H1 (cell line): ENCODE measurements at regions of chr9 and their contacts with region 1.

Region 1: GRCh38 chr9:114291064-114291474 is 31.8 kb upstream of the ORM1 start:
- DNase-seq: peak; percentile 62 to 97
- H3K4me3 ChIP-seq: no peak overlapping the region
- H3K27ac ChIP-seq: no peak overlapping the region
- H3K4me1 ChIP-seq: peaks cover 0 to 13% (median 2%) of the 10 kb centered on the region in 4 experiments; a peak in 5 of 7 replicates
- H3K27me3 ChIP-seq: no peaks in the 10 kb centered on the region
- CTCF ChIP-seq: peak in 2 of 3 experiments; percentile 85 to 92; a peak in 3 of 4 replicates
- EP300 ChIP-seq: no peak
- POLR2A ChIP-seq: no peak
- RAD21 ChIP-seq: peak; percentile 92 to 94

Region 2: GRCh38 chr9:114098016-114098935 is 192.8 kb before region 1 on chr9:
- CTCF ChIA-PET with region 1: interaction called, 205 read pairs
- POLR2A ChIA-PET with region 1: interaction called, 3 read pairs
- DNase-seq: peak in 1 of 2 experiments; percentile 88
- H3K4me3 ChIP-seq: peak overlapping the region; percentile 58 to 84 (median 62)
- H3K27ac ChIP-seq: no peak overlapping the region
- H3K4me1 ChIP-seq: peaks cover 0 to 16% (median 10%) of the 10 kb centered on the region in 4 experiments; a peak in 6 of 7 replicates
- H3K27me3 ChIP-seq: peaks cover 2 to 27% (median 19%) of the 10 kb centered on the region in 4 experiments
- CTCF ChIP-seq: peak in 1 of 3 experiments; percentile 33; a peak in 1 of 4 replicates
- EP300 ChIP-seq: no peak
- POLR2A ChIP-seq: no peak
- RAD21 ChIP-seq: no peak

Region 3: GRCh38 chr9:114141553-114142402 is 149.3 kb before region 1 on chr9:
- CTCF ChIA-PET with region 1: interaction called, 17 read pairs
- POLR2A ChIA-PET with region 1: no interaction called
- DNase-seq: no peak
- H3K4me3 ChIP-seq: no peak overlapping the region
- H3K27ac ChIP-seq: no peak overlapping the region
- H3K4me1 ChIP-seq: no peaks in the 10 kb centered on the region
- H3K27me3 ChIP-seq: peaks cover 0 to 2% (median 0%) of the 10 kb centered on the region in 4 experiments; a peak in 3 of 7 replicates
- CTCF ChIP-seq: no peak
- EP300 ChIP-seq: no peak
- POLR2A ChIP-seq: no peak
- RAD21 ChIP-seq: no peak

Region 4: DNA sequence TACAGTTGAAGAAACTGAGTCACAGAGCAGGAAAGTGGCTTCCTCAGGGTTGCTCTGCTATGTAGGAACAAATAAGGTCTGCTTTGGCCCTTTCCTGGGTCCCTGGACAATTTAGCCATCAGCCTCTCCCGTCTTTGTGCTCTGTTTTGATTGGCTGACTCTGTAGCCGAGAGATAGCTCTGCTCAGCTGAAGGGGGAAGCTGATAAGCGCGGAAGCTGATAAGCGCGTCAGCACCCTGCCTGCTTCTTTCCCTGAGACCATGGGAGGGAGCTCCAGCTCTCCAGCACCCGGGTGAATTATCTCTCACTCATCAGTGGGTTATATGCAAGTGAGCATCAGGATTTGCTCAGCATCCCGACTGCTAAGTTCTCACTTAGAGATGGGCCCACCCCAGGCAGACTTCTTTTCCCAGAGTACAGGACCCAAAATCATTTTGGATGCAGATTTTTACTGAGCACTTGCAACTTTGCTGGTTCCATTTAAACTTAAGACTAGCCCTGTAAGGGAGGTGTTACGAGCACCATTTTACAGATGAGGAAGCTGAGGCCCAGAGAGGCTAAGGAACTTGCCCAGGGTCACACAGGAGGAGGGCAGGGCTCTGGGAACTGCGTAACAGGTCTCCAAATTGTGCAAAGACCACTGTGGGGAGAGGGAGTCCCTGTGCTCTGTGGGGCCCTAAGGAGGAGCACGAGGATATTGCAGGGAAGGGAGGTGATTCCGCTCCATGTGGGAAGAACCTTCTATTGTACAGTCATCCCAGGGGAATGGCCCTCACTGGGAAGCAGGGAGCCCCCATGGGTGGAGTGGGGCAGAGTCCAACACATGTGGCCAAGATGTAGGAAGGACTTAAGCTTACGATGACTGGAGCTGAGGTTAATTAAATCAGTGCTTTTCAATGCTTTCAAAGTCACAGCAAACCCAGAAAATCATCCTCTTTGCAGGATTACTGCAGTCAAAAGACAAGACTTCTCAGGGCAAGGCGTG is 51.9 kb before region 1 on chr9:
- CTCF ChIA-PET with region 1: interaction called, 11 read pairs
- POLR2A ChIA-PET with region 1: no interaction called
- DNase-seq: no peak
- H3K4me3 ChIP-seq: no peak overlapping the region
- H3K27ac ChIP-seq: no peak overlapping the region
- H3K4me1 ChIP-seq: peaks cover 0 to 4% (median 0%) of the 10 kb centered on the region in 4 experiments; a peak in 2 of 7 replicates
- H3K27me3 ChIP-seq: no peaks in the 10 kb centered on the region; a peak in 2 of 7 replicates
- CTCF ChIP-seq: peak in 2 of 3 experiments; percentile 40 to 52; a peak in 3 of 4 replicates
- EP300 ChIP-seq: no peak
- POLR2A ChIP-seq: no peak
- RAD21 ChIP-seq: peak; percentile 52 to 57

Region 5: DNA sequence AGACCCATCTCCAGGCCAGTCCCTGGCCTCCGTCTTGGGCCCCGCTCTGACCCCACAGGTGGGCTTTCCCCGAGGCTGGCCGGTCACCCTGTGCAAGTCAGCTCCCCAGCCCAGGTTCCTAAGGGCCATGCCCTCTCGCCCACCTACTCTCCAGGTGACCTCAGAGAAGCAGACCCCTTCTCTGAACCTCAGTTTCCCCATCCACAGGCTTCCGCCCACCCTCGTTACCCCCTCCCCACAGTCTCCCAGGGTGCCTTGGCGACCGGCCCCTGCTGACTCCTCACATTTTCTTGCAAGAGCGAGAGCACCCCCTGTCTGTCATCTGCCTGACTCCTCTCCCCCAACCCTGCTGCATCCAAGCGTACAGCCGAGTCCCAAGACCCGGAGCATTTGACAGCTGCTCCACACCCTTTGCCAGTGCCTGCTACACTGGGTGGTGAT is 19.4 kb before region 1 on chr9:
- CTCF ChIA-PET with region 1: interaction called, 21 read pairs
- POLR2A ChIA-PET with region 1: no interaction called
- DNase-seq: peak in 1 of 2 experiments; percentile 80
- H3K4me3 ChIP-seq: no peak overlapping the region
- H3K27ac ChIP-seq: no peak overlapping the region
- H3K4me1 ChIP-seq: no peaks in the 10 kb centered on the region
- H3K27me3 ChIP-seq: no peaks in the 10 kb centered on the region
- CTCF ChIP-seq: peak; percentile 66 to 69 (median 66)
- EP300 ChIP-seq: no peak
- POLR2A ChIP-seq: no peak
- RAD21 ChIP-seq: peak; percentile 70 to 77

Region 6: GRCh38 chr9:114308411-114308811 is 17.3 kb after region 1 on chr9:
- CTCF ChIA-PET with region 1: no interaction called
- POLR2A ChIA-PET with region 1: no interaction called
- DNase-seq: peak in 1 of 2 experiments; percentile 37
- H3K4me3 ChIP-seq: no peak overlapping the region
- H3K27ac ChIP-seq: no peak overlapping the region
- H3K4me1 ChIP-seq: no peaks in the 10 kb centered on the region; a peak in 2 of 7 replicates
- H3K27me3 ChIP-seq: no peaks in the 10 kb centered on the region
- CTCF ChIP-seq: no peak
- EP300 ChIP-seq: no peak
- POLR2A ChIP-seq: no peak
- RAD21 ChIP-seq: no peak

Region 7: DNA sequence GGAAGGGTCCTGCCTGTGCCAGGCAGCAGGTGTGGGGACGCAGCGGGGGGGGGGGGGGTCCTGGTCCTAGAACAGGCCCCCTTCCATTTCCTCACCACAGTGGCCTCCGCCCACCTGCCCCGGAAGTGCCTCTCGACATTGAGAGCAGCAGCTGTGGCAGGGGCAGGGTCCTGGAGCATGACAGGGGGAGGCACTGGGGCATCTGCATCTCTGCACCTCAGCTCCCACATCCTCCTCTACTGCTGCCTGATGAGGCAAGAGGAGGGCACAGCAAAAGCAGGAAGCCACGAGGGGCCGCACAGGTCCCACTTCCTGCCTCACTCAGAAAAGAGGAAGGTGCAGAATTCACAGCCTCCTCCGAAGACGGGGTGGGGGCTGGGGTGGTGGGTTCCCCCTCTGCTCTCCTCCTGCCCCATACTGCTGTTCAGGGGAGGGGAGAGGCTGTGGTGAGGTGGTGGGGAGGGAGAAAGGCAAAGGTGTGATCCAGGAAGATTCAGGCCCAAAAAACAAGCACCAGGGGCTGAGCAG is 81.9 kb after region 1 on chr9:
- CTCF ChIA-PET with region 1: no interaction called
- POLR2A ChIA-PET with region 1: no interaction called
- DNase-seq: no peak
- H3K4me3 ChIP-seq: no peak overlapping the region
- H3K27ac ChIP-seq: no peak overlapping the region
- H3K4me1 ChIP-seq: peaks cover 7 to 30% (median 22%) of the 10 kb centered on the region in 4 experiments
- H3K27me3 ChIP-seq: no peaks in the 10 kb centered on the region
- CTCF ChIP-seq: no peak
- EP300 ChIP-seq: no peak
- POLR2A ChIP-seq: no peak
- RAD21 ChIP-seq: no peak